Activated T-helper 1 cell treated with anti-CD3 and anti-CD28 coated beads, Interleukin-12 subunit alpha, Interleukin-12 subunit beta, Interleukin-2, Interleukin-4 antibody, amounts not matched to agents 30 ng/mL and 10 ng/mL and 1 ng/mL, durations not matched to agents 14 hours and 24 hours and 36 hours (primary cell): ENCODE measurements at regions of chr14 and their contacts with region 1.

Region 1: GRCh38 chr14:22556990-22557623 is 31.9 kb downstream of the DAD1 start:
- DNase-seq: peak; percentile 88
- H3K4me3 Mint-ChIP-seq: peak overlapping the region; percentile 83
- H3K27ac Mint-ChIP-seq: peak overlapping the region; percentile 96
- H3K4me1 Mint-ChIP-seq: peaks cover 93% of the 10 kb centered on the region
- H3K27me3 Mint-ChIP-seq: peaks cover 2% of the 10 kb centered on the region

Region 2: GRCh38 chr14:21748869-21749303 is 808.2 kb before region 1 on chr14:
- intact Hi-C with region 1: loop called (anchors 5 kb)
- DNase-seq: peak; percentile 28
- H3K4me3 Mint-ChIP-seq: peak overlapping the region; percentile 67
- H3K27ac Mint-ChIP-seq: peak overlapping the region; percentile 11
- H3K4me1 Mint-ChIP-seq: peaks cover 8% of the 10 kb centered on the region
- H3K27me3 Mint-ChIP-seq: peaks cover 25% of the 10 kb centered on the region

Region 3: GRCh38 chr14:22122227-22122818 is 434.8 kb before region 1 on chr14:
- intact Hi-C with region 1: loop called (anchors 2 kb)
- DNase-seq: no peak
- H3K4me3 Mint-ChIP-seq: peak overlapping the region; percentile 90
- H3K27ac Mint-ChIP-seq: peak overlapping the region; percentile 79
- H3K4me1 Mint-ChIP-seq: peaks cover 21% of the 10 kb centered on the region
- H3K27me3 Mint-ChIP-seq: no peaks in the 10 kb centered on the region

Region 4: GRCh38 chr14:22276913-22277816 is 279.9 kb before region 1 on chr14:
- intact Hi-C with region 1: loop called (anchors 5 kb)
- DNase-seq: no peak
- H3K4me3 Mint-ChIP-seq: no peak overlapping the region
- H3K27ac Mint-ChIP-seq: no peak overlapping the region
- H3K4me1 Mint-ChIP-seq: no peaks in the 10 kb centered on the region
- H3K27me3 Mint-ChIP-seq: no peaks in the 10 kb centered on the region

Region 5: GRCh38 chr14:22519877-22520685 is 37.0 kb before region 1 on chr14:
- intact Hi-C with region 1: loop called (anchors 5 kb)
- DNase-seq: no peak
- H3K4me3 Mint-ChIP-seq: peak overlapping the region; percentile 84
- H3K27ac Mint-ChIP-seq: peak overlapping the region; percentile 95
- H3K4me1 Mint-ChIP-seq: peaks cover 98% of the 10 kb centered on the region
- H3K27me3 Mint-ChIP-seq: no peaks in the 10 kb centered on the region

Region 6: DNA sequence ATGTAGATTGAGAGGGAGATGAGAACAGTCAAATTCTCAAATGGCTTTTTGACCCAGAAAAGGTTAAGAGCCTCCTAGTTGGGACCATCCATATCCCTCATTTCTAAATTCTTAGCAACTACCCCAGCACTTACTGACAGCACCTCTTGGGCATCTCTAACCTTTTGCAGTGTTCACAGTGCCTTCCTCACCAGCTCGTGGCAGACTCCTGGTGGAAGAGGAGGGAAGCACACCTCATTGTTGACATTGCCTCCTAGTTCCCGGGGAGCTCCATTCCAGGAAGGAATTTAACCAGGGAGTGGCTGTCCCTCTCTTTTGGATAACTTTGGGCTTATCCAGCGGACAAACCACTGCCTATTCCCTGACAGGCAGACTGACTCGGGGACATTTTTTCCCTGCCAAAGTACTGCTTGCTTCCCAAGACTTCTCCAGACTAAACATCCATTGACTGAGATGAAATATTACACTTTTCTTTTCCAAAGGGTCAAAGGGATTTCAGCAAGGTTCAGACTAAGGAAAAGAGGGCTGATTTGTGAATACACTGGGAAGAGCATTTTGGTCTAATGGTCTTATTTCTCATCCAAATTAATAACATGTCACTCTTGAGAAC is 96.0 kb after region 1 on chr14:
- intact Hi-C with region 1: loop called (anchors 1 kb)
- DNase-seq: peak; percentile 25
- H3K4me3 Mint-ChIP-seq: no peak overlapping the region
- H3K27ac Mint-ChIP-seq: no peak overlapping the region
- H3K4me1 Mint-ChIP-seq: no peaks in the 10 kb centered on the region
- H3K27me3 Mint-ChIP-seq: no peaks in the 10 kb centered on the region

Region 7: DNA sequence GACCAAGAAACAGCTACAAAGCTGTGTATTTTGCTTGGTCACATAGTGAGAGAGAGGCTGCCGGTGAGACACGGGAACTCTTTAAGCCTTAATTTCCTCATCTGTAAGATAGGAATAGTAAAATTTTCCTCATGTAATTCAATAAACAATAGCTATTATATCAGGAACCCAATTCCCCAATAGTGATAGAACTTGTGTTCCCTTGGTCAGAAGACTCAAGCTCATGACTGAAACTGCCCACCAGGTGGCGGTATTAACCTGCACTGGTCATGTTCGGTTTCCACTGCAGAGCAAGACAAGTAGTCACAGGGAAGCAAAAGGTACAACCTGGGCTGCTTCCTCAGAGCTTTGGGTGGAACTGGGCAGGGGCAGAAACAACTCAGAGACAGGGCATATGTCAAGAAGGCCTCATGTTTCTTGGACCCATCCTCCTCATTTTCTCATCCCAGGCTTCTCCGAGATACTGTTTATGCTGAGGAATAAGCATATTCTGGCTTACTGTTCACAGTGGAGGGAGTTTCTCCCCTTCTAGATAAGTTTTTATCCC is 429.5 kb after region 1 on chr14:
- intact Hi-C with region 1: loop called (anchors 5 kb)
- DNase-seq: peak; percentile 79
- H3K4me3 Mint-ChIP-seq: no peak overlapping the region
- H3K27ac Mint-ChIP-seq: no peak overlapping the region
- H3K4me1 Mint-ChIP-seq: no peaks in the 10 kb centered on the region
- H3K27me3 Mint-ChIP-seq: peaks cover 3% of the 10 kb centered on the region